ENCODE measurements at regions of chr4 and their contacts with region 1.

Region 1: DNA sequence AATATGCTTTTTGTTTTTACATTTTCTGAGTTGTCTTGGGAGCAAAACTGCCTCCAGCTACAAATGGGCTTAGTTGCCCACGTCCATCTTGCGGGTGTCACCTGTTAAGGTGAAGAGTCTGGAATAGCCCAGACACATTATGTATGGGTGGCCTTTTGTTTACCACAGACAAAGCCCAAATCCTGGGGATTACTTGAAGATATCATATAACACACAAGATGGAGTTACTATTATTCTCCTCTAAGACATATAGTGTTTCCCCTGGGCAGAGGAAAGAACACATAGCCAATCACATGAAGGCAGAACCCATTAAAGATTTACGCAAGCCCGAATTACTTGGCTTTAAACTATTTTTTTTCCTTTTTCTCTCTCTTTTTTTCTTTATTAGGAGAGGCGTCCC is 625.6 kb upstream of the FAM241A start:
- DNase-seq: no peak
- ATAC-seq: no peak
- H3K4me3 ChIP-seq: no peak overlapping the region
- H3K27ac ChIP-seq: no peak overlapping the region
- H3K4me1 ChIP-seq: no peaks in the 10 kb centered on the region
- H3K27me3 ChIP-seq: no peaks in the 10 kb centered on the region

Region 2: GRCh38 chr4:111537871-111538270 is 18.2 kb after region 1 on chr4:
- intact Hi-C with region 1: loop called in 1 of 2 experiments (anchors 1 kb)
- DNase-seq: no peak
- ATAC-seq: no peak
- H3K4me3 ChIP-seq: no peak overlapping the region
- H3K27ac ChIP-seq: no peak overlapping the region
- H3K4me1 ChIP-seq: no peaks in the 10 kb centered on the region
- H3K27me3 ChIP-seq: no peaks in the 10 kb centered on the region

Region 3: DNA sequence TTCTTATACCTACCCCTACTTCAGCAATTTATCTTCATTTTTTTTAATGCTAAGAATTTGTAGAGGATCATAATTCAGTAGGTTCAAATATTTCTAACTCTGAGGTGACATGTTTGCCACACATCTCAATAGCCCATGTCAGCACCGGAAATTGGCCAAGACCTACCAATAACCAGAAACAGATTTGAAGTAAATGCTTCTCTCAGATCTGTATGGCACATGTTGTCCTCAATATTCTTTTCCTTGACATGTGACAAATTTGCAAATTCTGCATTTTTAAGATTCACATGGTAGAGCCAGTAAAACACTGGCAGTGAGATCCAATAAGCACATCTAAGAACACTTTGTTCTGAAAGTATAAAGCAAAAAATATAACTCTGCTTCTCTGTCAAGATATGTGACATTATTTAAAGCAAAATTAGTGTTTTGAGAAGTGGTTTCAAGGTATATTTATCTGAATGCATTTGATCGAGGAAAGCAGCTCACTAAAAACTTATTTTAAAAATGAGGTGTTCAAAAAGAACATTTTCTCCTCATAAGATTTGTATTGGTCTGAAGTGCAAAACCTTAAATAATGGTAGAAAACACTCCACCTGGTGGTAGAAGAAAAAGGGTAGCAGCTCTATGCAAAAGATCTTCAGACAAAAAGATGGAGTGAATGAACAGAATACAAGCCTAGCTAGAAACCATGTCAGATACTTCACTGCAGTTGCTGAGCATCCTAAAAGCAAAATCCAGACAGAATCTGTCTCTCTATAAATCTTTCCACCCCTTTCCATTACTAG is 111.7 kb after region 1 on chr4:
- intact Hi-C with region 1: no loop called
- DNase-seq: no peak
- ATAC-seq: no peak
- H3K4me3 ChIP-seq: no peak overlapping the region
- H3K27ac ChIP-seq: no peak overlapping the region
- H3K4me1 ChIP-seq: no peaks in the 10 kb centered on the region
- H3K27me3 ChIP-seq: no peaks in the 10 kb centered on the region

Region 4: GRCh38 chr4:111748157-111748556 is 228.5 kb after region 1 on chr4:
- intact Hi-C with region 1: no loop called
- DNase-seq: no peak
- ATAC-seq: no peak
- H3K4me3 ChIP-seq: no peak overlapping the region
- H3K27ac ChIP-seq: no peak overlapping the region
- H3K4me1 ChIP-seq: no peaks in the 10 kb centered on the region
- H3K27me3 ChIP-seq: peaks cover 0 to 1% of the 10 kb centered on the region in 2 donors

Measured in aorta (tissue), 5 donors.